ENCODE measurements at regions of chrX and their contacts with region 1.

Region 1: GRCh38 chrX:130268500-130269170 is at the start of gene ZNF280C:
- DNase-seq: peak; percentile 95
- H3K4me3 Mint-ChIP-seq: peak within 1 kb of the TSS; percentile 85
- H3K27ac Mint-ChIP-seq: peak within 1 kb of the TSS; percentile 79
- H3K4me1 Mint-ChIP-seq: peaks cover 18% of the 10 kb centered on the region
- H3K27me3 Mint-ChIP-seq: no peaks in the 10 kb centered on the region
- total RNA-seq, gene ZNF280C: 3.9 to 4.0 TPM

Region 2: DNA sequence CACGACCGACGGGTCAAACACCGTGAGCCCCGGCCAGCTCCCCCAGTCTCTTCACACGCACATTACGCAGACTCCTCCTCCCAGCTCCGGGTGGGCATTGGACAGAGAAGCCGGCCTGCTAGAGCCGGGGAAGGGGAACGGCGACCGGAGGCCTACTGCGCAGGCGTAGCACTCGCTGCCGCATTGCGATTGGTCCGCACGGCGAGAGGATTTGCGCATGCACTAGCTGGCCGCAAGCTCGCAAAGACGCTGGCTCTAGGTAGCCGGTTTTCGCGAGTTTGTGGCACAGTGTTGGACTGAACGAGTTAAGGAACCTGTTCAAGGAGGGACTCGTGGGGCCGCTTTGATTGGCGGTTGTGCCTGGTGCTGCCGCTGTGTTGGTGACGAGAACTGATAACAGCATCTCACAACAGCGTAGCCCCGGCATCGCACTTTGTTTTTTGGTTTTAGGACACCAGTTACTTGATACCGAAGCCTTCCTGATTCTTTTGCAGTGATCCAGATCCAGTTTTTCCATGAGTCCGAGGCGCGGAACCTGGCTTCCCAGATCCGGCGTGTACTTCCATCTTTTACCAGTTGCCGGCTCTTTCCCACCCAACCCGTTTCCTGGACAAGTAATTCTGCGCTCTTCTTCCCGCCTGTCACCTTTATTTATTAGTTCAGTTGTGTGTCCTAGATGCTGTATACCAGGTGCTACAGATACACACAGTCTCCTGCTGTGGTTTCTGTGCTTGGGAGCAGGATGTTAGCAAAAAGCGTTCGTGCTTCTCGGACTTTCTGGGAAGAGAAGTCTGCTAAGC is 102.7 kb before region 1 on chrX and contains the start of gene AIFM1:
- CTCF ChIA-PET with region 1: no interaction called
- intact Hi-C with region 1: loop called (anchors 2 kb)
- DNase-seq: peak; percentile 90
- H3K4me3 Mint-ChIP-seq: peak within 1 kb of the TSS; percentile 93
- H3K27ac Mint-ChIP-seq: peak within 1 kb of the TSS; percentile 92
- H3K4me1 Mint-ChIP-seq: peaks cover 35% of the 10 kb centered on the region
- H3K27me3 Mint-ChIP-seq: no peaks in the 10 kb centered on the region
- total RNA-seq, gene AIFM1: 59.4 to 63.1 TPM

Region 3: GRCh38 chrX:130339408-130340222 is 71.0 kb after region 1 on chrX and contains the start of gene SLC25A14:
- CTCF ChIA-PET with region 1: no interaction called
- intact Hi-C with region 1: loop called (anchors 1 kb)
- DNase-seq: peak; percentile 82
- H3K4me3 Mint-ChIP-seq: peak within 1 kb of the TSS; percentile 86
- H3K27ac Mint-ChIP-seq: peak within 1 kb of the TSS; percentile 89
- H3K4me1 Mint-ChIP-seq: peaks cover 13% of the 10 kb centered on the region
- H3K27me3 Mint-ChIP-seq: no peaks in the 10 kb centered on the region
- total RNA-seq, gene SLC25A14: 7.4 to 9.0 TPM

Region 4: DNA sequence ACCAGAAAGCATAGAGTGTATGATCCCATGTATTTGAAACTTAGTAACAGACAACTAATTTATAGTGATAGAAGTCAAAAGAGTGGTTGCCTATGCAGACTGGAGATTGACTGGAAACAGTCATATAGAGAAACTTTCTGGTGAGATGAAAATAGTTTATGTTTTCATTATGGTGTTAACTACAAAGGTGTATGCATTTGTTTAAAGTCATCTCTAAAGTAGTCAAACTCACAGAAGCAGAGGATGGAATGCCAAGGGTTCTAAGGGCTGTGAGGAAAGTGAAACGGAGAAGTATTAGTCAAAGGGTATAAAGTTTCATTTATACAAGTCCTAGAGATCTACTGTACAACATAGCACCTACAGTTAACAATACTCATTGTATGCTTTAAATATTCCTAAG is 588.6 kb after region 1 on chrX:
- CTCF ChIA-PET with region 1: no interaction called
- intact Hi-C with region 1: loop called (anchors 2 kb)
- DNase-seq: peak; percentile 19
- H3K4me3 Mint-ChIP-seq: no peak overlapping the region
- H3K27ac Mint-ChIP-seq: no peak overlapping the region
- H3K4me1 Mint-ChIP-seq: peaks cover 8% of the 10 kb centered on the region
- H3K27me3 Mint-ChIP-seq: no peaks in the 10 kb centered on the region

Region 5: DNA sequence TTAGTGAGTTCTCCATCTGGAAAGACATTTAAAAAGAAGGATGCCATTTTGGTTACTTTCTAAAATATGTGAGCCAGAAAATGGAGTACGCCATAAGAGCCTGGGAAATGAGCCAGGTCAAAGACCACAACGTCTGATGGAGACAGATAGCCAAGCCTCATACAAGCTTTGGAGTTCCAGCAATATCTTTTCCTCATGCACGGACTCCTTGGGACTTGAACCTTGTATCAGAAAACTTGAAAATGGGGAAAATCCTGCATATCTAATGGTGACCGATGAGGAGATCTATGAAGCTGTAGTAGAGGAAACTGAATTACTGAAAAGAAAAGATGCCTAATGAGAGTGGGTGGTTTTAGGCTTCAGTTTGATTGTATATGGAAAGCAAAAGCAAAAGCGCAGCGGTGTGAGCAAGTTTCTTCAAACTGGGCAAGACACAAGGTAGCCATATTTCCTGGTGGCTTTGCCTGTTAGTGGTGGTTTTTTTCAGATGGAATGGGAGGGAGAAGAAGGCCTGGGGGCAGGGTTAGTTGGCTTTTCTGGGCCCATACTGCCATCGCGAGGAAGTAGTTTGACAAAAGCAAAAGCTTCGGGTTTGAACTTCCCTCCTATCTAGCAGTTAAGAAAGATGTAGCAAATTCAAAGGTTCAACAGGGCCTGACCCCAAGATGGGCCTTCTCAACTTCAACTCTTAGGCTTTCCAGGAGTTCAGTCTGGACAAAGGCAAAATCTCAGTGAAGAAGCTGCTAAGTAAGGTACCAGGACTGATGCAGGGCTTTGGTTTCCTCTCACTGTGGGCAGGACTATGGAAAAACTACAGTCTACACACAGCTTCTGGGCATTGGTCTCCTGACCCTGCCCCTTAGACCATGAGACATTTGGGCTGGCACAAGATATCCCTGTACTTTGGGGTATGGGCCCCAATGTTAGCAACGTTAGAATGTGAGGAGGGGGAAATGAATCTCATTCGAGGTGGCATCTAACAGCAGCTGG is 1544.5 kb after region 1 on chrX:
- CTCF ChIA-PET with region 1: no interaction called
- intact Hi-C with region 1: loop called (anchors 5 kb)
- DNase-seq: peak; percentile 79
- H3K4me3 Mint-ChIP-seq: peak overlapping the region; percentile 67
- H3K27ac Mint-ChIP-seq: peak overlapping the region; percentile 89
- H3K4me1 Mint-ChIP-seq: peaks cover 30% of the 10 kb centered on the region
- H3K27me3 Mint-ChIP-seq: no peaks in the 10 kb centered on the region

Measured in activated naive CD4-positive, alpha-beta T cell treated with anti-CD3 and anti-CD28 coated beads for 36 hours (primary cell).